Activated CD4-positive, alpha-beta memory T cell treated with anti-CD3 and anti-CD28 coated beads, Interleukin-2, amount 10 ng/mL, durations not matched to agents 7 days and 5 days (primary cell): ENCODE measurements at regions of chr2 and their contacts with region 1.

Region 1: GRCh38 chr2:217785544-217786045 is 217.2 kb downstream of the TNS1 start:
- DNase-seq: peak; percentile 77
- H3K4me3 Mint-ChIP-seq: no peak overlapping the region
- H3K27ac Mint-ChIP-seq: no peak overlapping the region
- H3K4me1 Mint-ChIP-seq: peaks cover 22% of the 10 kb centered on the region
- H3K27me3 Mint-ChIP-seq: peaks cover 5% of the 10 kb centered on the region

Region 2: GRCh38 chr2:217798743-217799562 is 13.4 kb after region 1 on chr2:
- CTCF ChIA-PET with region 1: interaction called, 47 read pairs
- POLR2A ChIA-PET with region 1: no interaction called
- DNase-seq: no peak
- H3K4me3 Mint-ChIP-seq: no peak overlapping the region
- H3K27ac Mint-ChIP-seq: no peak overlapping the region
- H3K4me1 Mint-ChIP-seq: peaks cover 3% of the 10 kb centered on the region
- H3K27me3 Mint-ChIP-seq: no peaks in the 10 kb centered on the region

Region 3: GRCh38 chr2:217858519-217859491 is 73.2 kb after region 1 on chr2:
- CTCF ChIA-PET with region 1: no interaction called
- POLR2A ChIA-PET with region 1: no interaction called
- DNase-seq: no peak
- H3K4me3 Mint-ChIP-seq: no peak overlapping the region
- H3K27ac Mint-ChIP-seq: no peak overlapping the region
- H3K4me1 Mint-ChIP-seq: no peaks in the 10 kb centered on the region
- H3K27me3 Mint-ChIP-seq: no peaks in the 10 kb centered on the region

Region 4: GRCh38 chr2:217880287-217880889 is 94.8 kb after region 1 on chr2:
- CTCF ChIA-PET with region 1: interaction called, 59 read pairs
- POLR2A ChIA-PET with region 1: no interaction called
- DNase-seq: no peak
- H3K4me3 Mint-ChIP-seq: no peak overlapping the region
- H3K27ac Mint-ChIP-seq: no peak overlapping the region
- H3K4me1 Mint-ChIP-seq: no peaks in the 10 kb centered on the region
- H3K27me3 Mint-ChIP-seq: no peaks in the 10 kb centered on the region

Region 5: DNA sequence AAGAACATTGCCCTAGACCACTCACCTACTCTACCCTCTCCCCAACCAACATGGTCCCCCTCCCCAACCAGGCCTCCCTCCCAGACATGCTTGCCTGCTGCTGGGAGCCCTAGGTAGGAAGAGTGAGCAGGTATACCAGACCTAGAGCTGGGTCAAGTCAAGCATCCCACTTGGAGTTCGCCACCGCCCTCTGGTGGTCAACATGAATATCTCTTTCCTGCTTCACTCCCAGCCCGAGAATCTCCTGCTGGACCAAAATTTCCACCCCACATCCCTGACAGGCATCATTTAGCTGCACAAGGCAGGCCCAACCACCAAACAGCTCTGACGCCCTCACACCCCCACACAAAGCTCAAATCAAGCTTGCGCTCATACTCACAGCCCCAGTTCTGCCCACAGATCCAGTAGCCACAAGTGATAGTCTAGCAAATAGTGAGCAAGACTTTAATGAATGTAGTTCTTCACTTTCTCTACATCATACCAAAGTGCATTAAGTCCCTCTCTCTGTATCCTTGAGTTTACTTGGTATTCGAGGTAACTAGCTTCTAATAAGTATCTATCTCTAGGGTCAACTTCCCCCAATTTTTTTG is 101.2 kb after region 1 on chr2:
- CTCF ChIA-PET with region 1: interaction called, 59 read pairs
- POLR2A ChIA-PET with region 1: interaction called, 6 read pairs
- DNase-seq: peak; percentile 70
- H3K4me3 Mint-ChIP-seq: no peak overlapping the region
- H3K27ac Mint-ChIP-seq: no peak overlapping the region
- H3K4me1 Mint-ChIP-seq: peaks cover 2% of the 10 kb centered on the region
- H3K27me3 Mint-ChIP-seq: no peaks in the 10 kb centered on the region

Region 6: DNA sequence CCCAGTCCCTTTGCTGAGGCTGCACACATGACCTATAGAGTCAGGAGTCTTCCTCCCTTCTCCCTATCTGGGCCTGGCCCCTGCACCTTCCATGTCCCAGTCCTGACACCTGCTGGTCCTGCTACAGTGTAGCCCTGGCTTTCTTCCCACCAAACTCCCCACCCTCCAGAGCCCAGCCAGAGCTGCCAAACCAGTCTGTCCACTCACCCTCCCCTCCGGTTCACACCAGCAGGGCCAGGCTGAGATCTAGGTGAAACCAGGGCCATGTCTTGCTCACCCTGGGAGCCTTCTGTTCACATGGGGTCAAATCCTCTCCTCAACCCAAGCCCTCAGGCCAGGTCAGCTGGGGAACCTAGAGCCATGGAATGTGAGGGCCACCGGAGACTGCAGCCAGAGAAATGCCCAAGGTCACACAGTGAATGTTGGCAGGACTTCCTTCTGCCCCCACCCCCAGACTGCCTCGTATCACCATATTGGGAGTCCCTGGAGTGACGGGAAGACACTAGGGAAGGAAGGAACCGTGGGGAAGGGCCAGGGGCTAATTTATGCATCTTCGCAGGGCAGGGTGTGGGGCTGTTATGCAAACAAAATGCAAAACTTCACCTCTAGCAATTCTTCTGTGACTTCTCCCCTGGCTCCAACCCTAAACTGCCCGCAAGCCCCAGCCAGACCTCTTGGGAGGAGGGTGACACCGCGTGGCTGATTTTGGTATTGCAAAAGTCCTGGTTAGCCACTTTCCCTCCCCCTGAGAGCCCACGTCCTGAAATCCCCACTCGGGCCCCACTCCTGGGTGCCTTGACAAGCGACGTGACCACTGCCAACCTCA is 202.6 kb after region 1 on chr2:
- CTCF ChIA-PET with region 1: interaction called, 20 read pairs
- POLR2A ChIA-PET with region 1: interaction called, 3 read pairs
- DNase-seq: peak; percentile 71
- H3K4me3 Mint-ChIP-seq: no peak overlapping the region
- H3K27ac Mint-ChIP-seq: no peak overlapping the region
- H3K4me1 Mint-ChIP-seq: no peaks in the 10 kb centered on the region
- H3K27me3 Mint-ChIP-seq: peaks cover 4% of the 10 kb centered on the region

Region 7: GRCh38 chr2:217993817-217994463 is 208.3 kb after region 1 on chr2:
- CTCF ChIA-PET with region 1: interaction called, 20 read pairs
- POLR2A ChIA-PET with region 1: interaction called, 3 read pairs
- DNase-seq: peak; percentile 60
- H3K4me3 Mint-ChIP-seq: no peak overlapping the region
- H3K27ac Mint-ChIP-seq: no peak overlapping the region
- H3K4me1 Mint-ChIP-seq: no peaks in the 10 kb centered on the region
- H3K27me3 Mint-ChIP-seq: peaks cover 9% of the 10 kb centered on the region